B cell (primary cell): ENCODE measurements at regions of chr11 and their contacts with region 1.

Region 1: GRCh38 chr11:108121274-108122155 is at the start of gene ACAT1:
- DNase-seq: peak; percentile 92
- ATAC-seq: peak; percentile 100
- H3K4me3 ChIP-seq: peak within 1 kb of the TSS; percentile 60 to 93 (median 86)
- H3K4me3 Mint-ChIP-seq: peak within 1 kb of the TSS; percentile 92
- H3K27ac ChIP-seq: peak within 1 kb of the TSS; percentile 46 to 53
- H3K27ac Mint-ChIP-seq: peak within 1 kb of the TSS; percentile 78
- H3K4me1 ChIP-seq: peaks cover 17 to 26% of the 10 kb centered on the region in 2 donors
- H3K4me1 Mint-ChIP-seq: peaks cover 34% of the 10 kb centered on the region
- H3K27me3 ChIP-seq: no peaks in the 10 kb centered on the region
- H3K27me3 Mint-ChIP-seq: no peaks in the 10 kb centered on the region
- CTCF ChIP-seq: peak; percentile 36
- total RNA-seq, gene ACAT1: 31.1 and 32.9 TPM in 2 replicates

Region 2: DNA sequence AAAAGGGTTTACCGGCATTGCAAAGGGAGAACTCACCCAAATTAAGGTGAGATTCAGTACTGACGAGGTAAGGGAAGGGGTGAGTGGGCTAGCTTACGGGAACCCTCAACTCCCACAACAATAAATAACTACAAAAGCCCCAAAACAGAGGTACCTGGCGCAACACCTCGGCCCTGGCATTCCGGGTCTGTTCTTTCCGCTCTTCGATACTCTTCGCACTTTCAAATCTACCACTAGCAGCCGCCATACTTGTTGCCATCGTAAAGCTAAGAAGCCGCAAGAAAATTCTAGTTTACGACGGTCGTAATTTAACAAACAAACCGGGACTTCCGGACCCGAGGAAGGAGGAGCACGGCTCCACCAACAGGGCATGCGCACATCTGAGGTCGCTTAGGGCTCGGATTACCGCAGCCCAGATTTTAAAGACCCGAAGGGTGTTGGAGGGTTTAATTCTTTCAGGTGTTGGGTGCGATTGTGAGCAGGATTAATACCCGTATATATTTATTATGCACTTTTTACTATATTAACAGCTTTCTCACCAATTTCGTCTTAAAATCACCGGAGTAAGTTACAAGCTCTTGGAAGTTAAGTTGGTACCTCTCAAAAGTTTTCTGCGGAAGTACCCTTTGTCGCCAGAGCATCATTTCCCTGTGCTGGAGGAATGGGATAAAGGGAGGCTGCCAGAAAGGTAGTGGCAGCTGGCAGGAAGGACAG is 663.8 kb before region 1 on chr11 and contains the start of gene CWF19L2:
- CTCF ChIA-PET with region 1: no interaction called
- POLR2A ChIA-PET with region 1: no interaction called
- intact Hi-C with region 1: loop called (anchors 5 kb)
- DNase-seq: peak; percentile 94
- ATAC-seq: peak; percentile 96
- H3K4me3 ChIP-seq: peak within 1 kb of the TSS; percentile 65 to 99 (median 94)
- H3K4me3 Mint-ChIP-seq: peak within 1 kb of the TSS; percentile 94
- H3K27ac ChIP-seq: peak within 1 kb of the TSS; percentile 64 to 88
- H3K27ac Mint-ChIP-seq: peak within 1 kb of the TSS; percentile 93
- H3K4me1 ChIP-seq: peaks cover 12 to 14% of the 10 kb centered on the region in 2 donors
- H3K4me1 Mint-ChIP-seq: peaks cover 27% of the 10 kb centered on the region
- H3K27me3 ChIP-seq: no peaks in the 10 kb centered on the region
- H3K27me3 Mint-ChIP-seq: peaks cover 5% of the 10 kb centered on the region
- CTCF ChIP-seq: no peak
- total RNA-seq, gene CWF19L2: 44.3 and 44.6 TPM in 2 replicates

Region 3: DNA sequence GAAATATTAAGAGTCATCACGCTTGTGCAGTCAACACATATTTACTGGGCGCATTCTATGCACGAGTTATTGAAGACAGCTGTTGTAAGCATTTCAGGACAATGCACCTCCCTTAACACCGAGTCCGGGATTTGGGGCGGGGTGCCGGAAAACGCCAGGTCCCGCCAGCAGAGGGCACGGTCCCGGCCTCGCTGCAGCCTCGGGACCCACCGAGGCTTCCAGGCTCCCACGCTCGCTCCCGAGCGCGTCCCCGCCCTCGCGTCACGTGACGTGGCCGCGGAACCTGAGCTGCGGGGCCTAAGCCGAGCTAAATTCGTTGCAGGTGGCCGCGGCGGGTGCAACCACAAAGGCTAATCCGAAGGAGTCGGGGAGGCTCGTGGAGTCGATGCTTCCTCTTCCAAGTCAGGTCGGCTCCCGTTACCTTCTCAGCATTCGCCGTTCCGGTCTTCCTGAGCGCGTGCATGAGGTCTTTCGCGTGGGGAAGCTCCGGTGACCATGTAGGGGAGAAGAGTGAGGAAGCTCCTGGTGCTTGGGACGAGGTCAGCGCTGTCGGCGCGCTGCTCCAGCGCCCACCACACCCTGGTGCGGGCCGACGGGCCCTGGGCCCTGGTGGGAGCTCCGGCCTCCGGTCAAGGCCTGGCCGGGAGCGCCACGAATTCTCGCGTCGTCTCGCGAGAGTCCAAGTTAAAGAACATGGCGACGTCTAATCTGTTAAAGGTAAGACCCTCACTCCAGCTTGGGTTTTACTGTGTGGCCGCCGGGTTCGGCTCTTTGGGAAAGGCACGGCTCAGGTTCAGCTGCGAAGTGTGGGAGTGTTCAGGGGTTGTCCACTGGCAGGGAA is 112.6 kb before region 1 on chr11 and contains the start of gene CUL5:
- CTCF ChIA-PET with region 1: interaction called, 5 read pairs
- POLR2A ChIA-PET with region 1: interaction called, 3 read pairs
- intact Hi-C with region 1: loop called (anchors 2 kb)
- DNase-seq: peak; percentile 95
- ATAC-seq: peak; percentile 91
- H3K4me3 ChIP-seq: peak within 1 kb of the TSS; percentile 79 to 100 (median 99)
- H3K4me3 Mint-ChIP-seq: peak within 1 kb of the TSS; percentile 99
- H3K27ac ChIP-seq: peak within 1 kb of the TSS; percentile 95 to 97
- H3K27ac Mint-ChIP-seq: peak within 1 kb of the TSS; percentile 98
- H3K4me1 ChIP-seq: peaks cover 18 to 20% of the 10 kb centered on the region in 2 donors
- H3K4me1 Mint-ChIP-seq: peaks cover 26% of the 10 kb centered on the region
- H3K27me3 ChIP-seq: no peaks in the 10 kb centered on the region
- H3K27me3 Mint-ChIP-seq: no peaks in the 10 kb centered on the region
- CTCF ChIP-seq: peak; percentile 80
- total RNA-seq, gene CUL5: 44.1 and 47.0 TPM in 2 replicates

Region 4: GRCh38 chr11:108160970-108161566 is 39.6 kb after region 1 on chr11:
- CTCF ChIA-PET with region 1: interaction called, 3 read pairs
- POLR2A ChIA-PET with region 1: no interaction called
- intact Hi-C with region 1: loop called (anchors 5 kb)
- DNase-seq: peak; percentile 76
- ATAC-seq: peak; percentile 99
- H3K4me3 ChIP-seq: no peak overlapping the region
- H3K4me3 Mint-ChIP-seq: peak overlapping the region; percentile 24
- H3K27ac ChIP-seq: peak overlapping the region; percentile 46 to 59
- H3K27ac Mint-ChIP-seq: peak overlapping the region; percentile 88
- H3K4me1 ChIP-seq: peaks cover 13 to 14% of the 10 kb centered on the region in 2 donors
- H3K4me1 Mint-ChIP-seq: peaks cover 12% of the 10 kb centered on the region
- H3K27me3 ChIP-seq: no peaks in the 10 kb centered on the region
- H3K27me3 Mint-ChIP-seq: no peaks in the 10 kb centered on the region
- CTCF ChIP-seq: no peak

Region 5: DNA sequence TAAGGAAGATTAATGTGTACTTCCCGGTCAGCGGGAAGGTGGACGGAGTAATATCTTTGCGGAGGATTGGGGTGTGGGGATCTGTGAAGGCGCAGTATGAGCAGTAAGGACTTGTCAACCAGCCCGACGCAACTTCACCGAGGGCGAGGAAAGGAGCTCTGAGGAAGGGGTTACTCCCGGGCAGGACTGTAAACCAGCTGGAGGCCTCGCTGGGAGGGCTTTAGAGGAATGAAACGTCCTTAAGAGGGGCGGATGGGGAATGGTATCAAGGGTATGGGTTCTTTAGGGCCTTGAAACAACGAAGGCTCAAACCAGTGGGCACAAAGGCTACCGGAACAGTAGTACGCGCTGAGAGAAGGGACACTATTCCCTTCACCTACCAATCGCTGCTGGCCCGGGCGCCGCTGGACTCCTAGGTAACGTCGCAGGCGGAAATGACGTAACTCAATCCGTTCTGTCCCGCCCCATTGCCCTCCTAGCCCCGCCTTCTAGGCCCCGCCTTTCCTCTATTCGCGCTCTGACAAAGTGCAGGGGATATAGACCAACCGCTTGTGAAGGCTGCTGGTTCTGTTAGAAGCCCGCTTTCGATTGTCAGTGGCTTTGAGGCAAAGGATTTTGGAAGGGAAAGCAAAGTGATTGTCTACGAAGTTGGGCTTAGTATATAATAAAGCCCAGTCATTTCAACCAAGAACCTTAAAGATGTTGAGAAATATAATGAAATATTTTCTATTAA is 345.7 kb after region 1 on chr11 and contains the start of gene C11orf65:
- CTCF ChIA-PET with region 1: no interaction called
- POLR2A ChIA-PET with region 1: no interaction called
- intact Hi-C with region 1: loop called (anchors 1 kb)
- DNase-seq: peak; percentile 98
- ATAC-seq: peak; percentile 96
- H3K4me3 ChIP-seq: peak within 1 kb of the TSS; percentile 79 to 96 (median 87)
- H3K4me3 Mint-ChIP-seq: peak within 1 kb of the TSS; percentile 98
- H3K27ac ChIP-seq: peak within 1 kb of the TSS; percentile 97 to 98
- H3K27ac Mint-ChIP-seq: peak within 1 kb of the TSS; percentile 99
- H3K4me1 ChIP-seq: peaks cover 0 to 11% of the 10 kb centered on the region in 2 donors
- H3K4me1 Mint-ChIP-seq: peaks cover 16% of the 10 kb centered on the region
- H3K27me3 ChIP-seq: no peaks in the 10 kb centered on the region
- H3K27me3 Mint-ChIP-seq: no peaks in the 10 kb centered on the region
- CTCF ChIP-seq: no peak
- total RNA-seq, gene C11orf65: 1.4 and 1.7 TPM in 2 replicates

Region 6: DNA sequence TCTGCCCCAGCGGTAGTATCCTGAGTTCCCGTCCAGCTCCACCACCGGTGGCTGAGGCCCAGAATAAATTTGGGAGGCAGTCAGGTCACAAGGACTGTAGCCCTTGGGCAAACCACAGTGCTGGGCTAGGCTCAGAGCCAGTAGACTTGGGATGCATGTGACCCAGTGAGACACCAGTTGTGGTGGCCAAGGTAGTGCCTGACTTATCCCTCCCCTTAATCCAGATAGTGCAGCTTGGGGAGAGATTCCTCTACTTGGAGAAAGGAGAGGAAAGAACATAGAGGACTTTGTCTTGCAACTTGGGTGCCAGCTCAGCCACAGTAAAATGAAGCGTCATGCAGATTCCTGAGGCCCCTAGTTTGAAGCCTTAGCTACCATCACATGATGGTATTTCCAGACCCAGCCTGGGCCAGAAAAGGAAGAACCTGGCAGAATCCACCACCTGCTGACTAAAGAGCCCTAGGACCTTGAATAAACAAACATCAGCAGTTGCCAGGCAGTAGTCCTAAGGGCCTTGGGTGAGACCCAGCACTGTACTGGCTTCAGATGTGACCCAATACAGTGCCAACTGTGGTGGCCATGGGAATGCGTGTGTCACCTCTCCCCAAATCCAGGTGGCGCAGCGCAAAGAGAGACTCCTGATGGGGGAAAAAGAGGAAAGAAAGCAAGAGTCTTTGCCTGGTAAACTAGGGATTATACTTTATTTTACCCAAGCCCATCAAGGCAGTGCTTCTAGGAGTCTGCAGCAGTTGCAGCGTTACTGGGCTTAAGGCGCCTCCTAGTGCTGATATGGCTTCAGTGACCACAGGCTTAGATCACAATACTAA is 526.4 kb after region 1 on chr11:
- CTCF ChIA-PET with region 1: interaction called, 39 read pairs
- POLR2A ChIA-PET with region 1: no interaction called
- intact Hi-C with region 1: loop called (anchors 1 kb)
- DNase-seq: peak; percentile 66
- ATAC-seq: peak; percentile 70
- H3K4me3 ChIP-seq: no peak overlapping the region
- H3K4me3 Mint-ChIP-seq: no peak overlapping the region
- H3K27ac ChIP-seq: no peak overlapping the region
- H3K27ac Mint-ChIP-seq: no peak overlapping the region
- H3K4me1 ChIP-seq: no peaks in the 10 kb centered on the region
- H3K4me1 Mint-ChIP-seq: no peaks in the 10 kb centered on the region
- H3K27me3 ChIP-seq: peaks cover 0 to 7% (median 0%) of the 10 kb centered on the region in 4 experiments
- H3K27me3 Mint-ChIP-seq: peaks cover 8% of the 10 kb centered on the region
- CTCF ChIP-seq: peak; percentile 71